GM12878 (cell line): ENCODE measurements at regions of chr12 and their contacts with region 1.

Region 1: GRCh38 chr12:768434-768833 is 16.1 kb downstream of the WNK1 start:
- DNase-seq: no peak
- ATAC-seq: peak; percentile 71
- H3K4me3 ChIP-seq: no peak overlapping the region
- H3K27ac ChIP-seq: no peak overlapping the region
- H3K4me1 ChIP-seq: peaks cover 6% of the 10 kb centered on the region
- H3K27me3 ChIP-seq: no peaks in the 10 kb centered on the region
- CTCF ChIP-seq: no peak
- EP300 ChIP-seq: no peak
- POLR2A ChIP-seq: no peak
- RAD21 ChIP-seq: no peak

Region 2: GRCh38 chr12:802242-803120 is 34.0 kb after region 1 on chr12:
- CTCF ChIA-PET with region 1: no interaction called
- POLR2A ChIA-PET with region 1: interaction called, 4 read pairs
- RAD21 ChIA-PET with region 1: no interaction called
- SMC1A ChIA-PET with region 1: interaction called, 3 read pairs
- in situ Hi-C with region 1: no loop called
- intact Hi-C with region 1: loop called (anchors 5 kb)
- DNase-seq: no peak
- ATAC-seq: peak; percentile 56
- H3K4me3 ChIP-seq: no peak overlapping the region
- H3K27ac ChIP-seq: peak overlapping the region; percentile 59
- H3K4me1 ChIP-seq: peaks cover 48% of the 10 kb centered on the region
- H3K27me3 ChIP-seq: no peaks in the 10 kb centered on the region
- CTCF ChIP-seq: no peak
- EP300 ChIP-seq: no peak
- POLR2A ChIP-seq: no peak
- RAD21 ChIP-seq: no peak